SK-N-SH (cell line): ENCODE measurements at regions of chr20 and their contacts with region 1.

Region 1: GRCh38 chr20:35207950-35208611 is 18.4 kb upstream of the MMP24 start:
- DNase-seq: peak; percentile 70
- H3K4me3 ChIP-seq: peak overlapping the region in 1 of 2 experiments; percentile 41; a peak in 1 of 4 replicates
- H3K27ac ChIP-seq: peak overlapping the region in 1 of 2 experiments; percentile 31; a peak in 2 of 4 replicates
- H3K4me1 ChIP-seq: peaks cover 0 to 2% of the 10 kb centered on the region in 2 experiments; a peak in 1 of 4 replicates
- H3K27me3 ChIP-seq: no peaks in the 10 kb centered on the region
- CTCF ChIP-seq: peak; percentile 90
- EP300 ChIP-seq: no peak
- RAD21 ChIP-seq: peak; percentile 99

Region 2: GRCh38 chr20:34876162-34877001 is 331.7 kb before region 1 on chr20 and contains the start of gene ACSS2:
- CTCF ChIA-PET with region 1: interaction called, 13 read pairs
- POLR2A ChIA-PET with region 1: no interaction called
- DNase-seq: peak; percentile 96
- H3K4me3 ChIP-seq: peak within 1 kb of the TSS; percentile 64 to 79
- H3K27ac ChIP-seq: peak within 1 kb of the TSS in 1 of 2 experiments; percentile 39; a peak in 1 of 4 replicates
- H3K4me1 ChIP-seq: peaks cover 0 to 22% of the 10 kb centered on the region in 2 experiments; a peak in 2 of 4 replicates
- H3K27me3 ChIP-seq: no peaks in the 10 kb centered on the region
- CTCF ChIP-seq: no peak
- EP300 ChIP-seq: no peak
- RAD21 ChIP-seq: no peak
- polyA plus RNA-seq, gene ACSS2: 25.5 and 31.4 TPM in 2 replicates

Region 3: DNA sequence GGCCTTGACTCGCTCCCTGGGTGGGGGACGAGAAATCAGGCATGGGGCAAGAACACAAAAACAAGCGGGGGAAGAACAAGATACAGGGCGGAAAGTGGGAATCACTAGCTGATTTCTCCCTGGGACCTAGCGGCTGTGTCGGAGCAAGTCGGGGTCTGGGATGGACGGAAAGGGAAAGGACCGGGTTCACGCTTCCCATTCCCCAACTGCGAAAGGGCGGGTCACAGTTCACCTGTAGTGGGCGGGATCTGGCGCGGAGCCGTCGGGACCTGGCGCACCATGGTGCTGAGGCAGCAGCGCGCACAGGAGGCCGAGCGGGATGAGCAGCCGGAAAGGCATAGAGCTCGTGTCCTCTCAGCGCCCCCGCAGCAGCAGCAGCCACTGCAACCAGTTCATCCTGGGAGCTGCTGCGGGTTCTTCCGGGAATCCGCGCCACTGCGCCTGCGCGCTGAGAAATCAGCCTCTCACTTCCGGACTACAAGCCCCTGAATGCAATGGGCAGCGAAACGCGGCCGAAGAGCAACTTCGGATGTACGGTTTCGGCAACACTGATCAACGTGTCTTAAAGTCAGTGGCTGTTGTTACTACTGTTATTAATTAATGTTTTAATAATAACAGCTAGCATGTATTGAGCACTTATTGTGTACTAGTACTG is 61.0 kb before region 1 on chr20 and contains the start of gene EDEM2:
- CTCF ChIA-PET with region 1: interaction called, 51 read pairs
- POLR2A ChIA-PET with region 1: interaction called, 3 read pairs
- DNase-seq: peak; percentile 95
- H3K4me3 ChIP-seq: peak within 1 kb of the TSS; percentile 89 to 94
- H3K27ac ChIP-seq: peak within 1 kb of the TSS; percentile 64 to 80
- H3K4me1 ChIP-seq: peaks cover 0 to 7% of the 10 kb centered on the region in 2 experiments; a peak in 2 of 4 replicates
- H3K27me3 ChIP-seq: no peaks in the 10 kb centered on the region
- CTCF ChIP-seq: no peak
- EP300 ChIP-seq: peak in 1 of 2 experiments; percentile 43; a peak in 1 of 4 replicates
- RAD21 ChIP-seq: no peak
- polyA plus RNA-seq, gene EDEM2: 30.4 and 34.3 TPM in 2 replicates

Region 4: GRCh38 chr20:35192111-35192872 is 15.8 kb before region 1 on chr20:
- CTCF ChIA-PET with region 1: interaction called, 19 read pairs
- POLR2A ChIA-PET with region 1: no interaction called
- DNase-seq: no peak
- H3K4me3 ChIP-seq: no peak overlapping the region
- H3K27ac ChIP-seq: no peak overlapping the region
- H3K4me1 ChIP-seq: no peaks in the 10 kb centered on the region
- H3K27me3 ChIP-seq: no peaks in the 10 kb centered on the region
- CTCF ChIP-seq: no peak
- EP300 ChIP-seq: no peak
- RAD21 ChIP-seq: no peak

Region 5: GRCh38 chr20:35226775-35227681 is 18.9 kb after region 1 on chr20:
- CTCF ChIA-PET with region 1: interaction called, 19 read pairs
- POLR2A ChIA-PET with region 1: no interaction called
- DNase-seq: peak; percentile 86
- H3K4me3 ChIP-seq: peak overlapping the region; percentile 36 to 46; a peak in 3 of 4 replicates
- H3K27ac ChIP-seq: peak overlapping the region in 1 of 2 experiments; percentile 36; a peak in 1 of 4 replicates
- H3K4me1 ChIP-seq: no peaks in the 10 kb centered on the region; a peak in 1 of 4 replicates
- H3K27me3 ChIP-seq: no peaks in the 10 kb centered on the region
- CTCF ChIP-seq: no peak
- EP300 ChIP-seq: no peak
- RAD21 ChIP-seq: no peak

Region 6: GRCh38 chr20:35269055-35269781 is 61.1 kb after region 1 on chr20:
- CTCF ChIA-PET with region 1: interaction called, 11 read pairs
- POLR2A ChIA-PET with region 1: no interaction called
- DNase-seq: peak; percentile 93
- H3K4me3 ChIP-seq: no peak overlapping the region; a peak in 1 of 4 replicates
- H3K27ac ChIP-seq: peak overlapping the region in 1 of 2 experiments; percentile 14; a peak in 1 of 4 replicates
- H3K4me1 ChIP-seq: peaks cover 0 to 12% of the 10 kb centered on the region in 2 experiments; a peak in 2 of 4 replicates
- H3K27me3 ChIP-seq: no peaks in the 10 kb centered on the region
- CTCF ChIP-seq: peak; percentile 87
- EP300 ChIP-seq: no peak
- RAD21 ChIP-seq: peak; percentile 83

Region 7: GRCh38 chr20:35395728-35396127 is 187.6 kb after region 1 on chr20:
- CTCF ChIA-PET with region 1: no interaction called
- POLR2A ChIA-PET with region 1: no interaction called
- DNase-seq: peak; percentile 19
- H3K4me3 ChIP-seq: no peak overlapping the region
- H3K27ac ChIP-seq: peak overlapping the region; percentile 68 to 91
- H3K4me1 ChIP-seq: peaks cover 13 to 39% of the 10 kb centered on the region in 2 experiments
- H3K27me3 ChIP-seq: no peaks in the 10 kb centered on the region
- CTCF ChIP-seq: peak; percentile 56
- EP300 ChIP-seq: peak in 1 of 2 experiments; percentile 63; a peak in 1 of 4 replicates
- RAD21 ChIP-seq: peak; percentile 18; the same call in 1 of the 2 replicates